ENCODE measurements at regions of chr12 and their contacts with region 1.

Region 1: DNA sequence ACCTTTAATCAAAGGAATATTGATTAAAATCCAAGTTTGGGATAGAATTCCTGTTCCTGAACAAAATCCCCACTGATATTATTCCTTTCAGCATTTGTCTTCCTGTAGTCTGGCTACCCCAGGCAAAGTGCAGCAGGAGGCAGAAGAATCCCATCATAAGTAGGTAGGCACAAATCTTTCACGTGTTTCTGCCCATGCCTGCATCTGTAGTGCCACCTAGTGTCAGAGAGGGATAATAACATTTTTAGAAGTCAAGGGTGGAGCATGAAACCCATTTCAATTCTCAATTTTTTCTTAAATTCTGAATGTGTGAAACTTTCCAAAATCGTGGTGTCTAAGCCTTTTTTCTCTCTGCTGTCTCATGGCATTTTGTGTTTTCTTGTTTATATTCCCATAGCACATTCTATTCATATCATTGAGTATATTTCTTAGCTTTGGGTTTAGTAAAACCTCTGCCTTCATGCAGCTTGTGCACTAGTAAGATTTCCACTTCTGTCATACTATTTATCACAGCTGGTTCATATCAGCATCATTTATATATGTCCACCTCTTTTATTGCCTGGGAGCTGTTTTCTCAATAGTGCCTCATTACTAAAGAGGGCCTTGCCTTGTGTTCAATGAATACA is 47.8 kb upstream of the RERG start:
- DNase-seq: peak in 3 of 5 donors; percentile 15 to 28 (median 27)
- ATAC-seq: peak in 2 of 4 donors; percentile 46 to 61
- H3K4me3 ChIP-seq: no peak overlapping the region
- H3K27ac ChIP-seq: no peak overlapping the region
- H3K4me1 ChIP-seq: no peaks in the 10 kb centered on the region
- H3K27me3 ChIP-seq: peaks cover 0 to 8% (median 0%) of the 10 kb centered on the region in 9 donors
- CTCF ChIP-seq: peak; percentile 74 to 94 (median 82)
- POLR2A ChIP-seq: no peak

Region 2: GRCh38 chr12:14554281-14555007 is 714.6 kb before region 1 on chr12:
- intact Hi-C with region 1: no loop called
- DNase-seq: peak; percentile 88 to 96 (median 90)
- ATAC-seq: peak; percentile 94 to 98 (median 96)
- H3K4me3 ChIP-seq: peak overlapping the region in 10 of 12 donors; percentile 5 to 45 (median 25)
- H3K27ac ChIP-seq: peak overlapping the region; percentile 64 to 93 (median 84)
- H3K4me1 ChIP-seq: peaks cover 0 to 41% (median 22%) of the 10 kb centered on the region in 12 donors
- H3K27me3 ChIP-seq: no peaks in the 10 kb centered on the region
- CTCF ChIP-seq: peak in 8 of 12 donors; percentile 15 to 59 (median 36)
- POLR2A ChIP-seq: no peak

Region 3: DNA sequence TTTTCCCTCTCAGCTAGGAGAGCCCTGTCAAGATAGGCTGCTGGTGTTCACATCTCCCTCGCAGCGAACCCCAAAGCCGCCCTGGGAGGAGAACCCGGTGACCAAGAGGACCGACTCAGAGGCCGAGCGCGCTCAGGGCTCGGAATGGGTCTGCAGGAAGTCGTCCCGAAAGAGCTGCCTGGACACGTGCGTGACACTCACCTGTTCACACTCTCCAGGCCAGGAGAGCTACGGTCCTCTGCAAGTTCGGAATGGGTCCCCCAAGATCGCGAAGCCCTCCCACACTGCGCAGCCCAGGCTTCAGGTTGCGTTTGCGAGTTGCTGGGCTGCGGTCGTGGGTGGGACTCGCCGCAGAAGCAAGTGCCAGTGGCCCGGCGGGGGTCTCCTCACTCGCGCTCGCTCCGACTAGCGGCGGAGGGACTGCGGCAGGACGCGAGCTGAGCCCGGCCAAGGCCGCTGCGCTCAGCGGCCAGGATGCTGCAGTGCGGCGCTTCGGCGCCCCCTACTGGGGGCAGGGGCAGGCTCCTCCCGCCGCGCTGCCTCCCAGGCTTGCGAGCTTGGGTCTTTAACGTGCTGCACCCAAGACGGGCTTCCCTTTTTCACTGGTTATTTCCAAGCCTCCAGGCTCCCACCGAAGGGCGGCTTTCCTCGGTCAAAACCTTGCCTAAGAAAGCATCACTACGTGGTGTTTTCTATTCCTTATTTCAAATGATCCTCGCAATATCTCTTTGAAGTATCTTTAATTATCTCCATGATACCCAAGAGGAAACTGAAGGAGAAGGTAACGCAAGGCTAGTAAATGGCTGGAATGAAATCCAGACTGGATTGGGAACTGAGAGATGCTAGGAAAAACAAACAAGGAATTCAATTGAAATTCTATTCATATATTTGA is 47.8 kb before region 1 on chr12 and contains the start of gene RERG:
- intact Hi-C with region 1: loop called in 7 of 10 experiments (anchors 2 to 5 kb)
- DNase-seq: peak; percentile 78 to 92 (median 84)
- ATAC-seq: peak; percentile 84 to 100 (median 98)
- H3K4me3 ChIP-seq: peak within 1 kb of the TSS; percentile 44 to 75 (median 60)
- H3K27ac ChIP-seq: peak within 1 kb of the TSS; percentile 7 to 86 (median 80)
- H3K4me1 ChIP-seq: peaks cover 0 to 12% (median 5%) of the 10 kb centered on the region in 12 donors
- H3K27me3 ChIP-seq: peaks cover 0 to 35% (median 3%) of the 10 kb centered on the region in 9 donors
- CTCF ChIP-seq: peak; percentile 91 to 99 (median 98)
- POLR2A ChIP-seq: no peak
- total RNA-seq, gene RERG: 2.9 to 17.7 (median 4.2) TPM

Region 4: GRCh38 chr12:15227004-15227679 is 41.9 kb before region 1 on chr12:
- intact Hi-C with region 1: loop called in 7 of 10 experiments (anchors 2 to 5 kb)
- DNase-seq: peak in 2 of 5 donors; percentile 16 to 45
- ATAC-seq: peak in 3 of 4 donors; percentile 29 to 48 (median 42)
- H3K4me3 ChIP-seq: no peak overlapping the region
- H3K27ac ChIP-seq: peak overlapping the region in 1 of 12 donors; percentile 45
- H3K4me1 ChIP-seq: peaks cover 0 to 9% (median 0%) of the 10 kb centered on the region in 12 donors
- H3K27me3 ChIP-seq: peaks cover 0 to 16% (median 3%) of the 10 kb centered on the region in 9 donors
- CTCF ChIP-seq: peak; percentile 31 to 67 (median 46)
- POLR2A ChIP-seq: no peak

Measured in heart left ventricle (tissue), 16 donors.